Panc1 (cell line): ENCODE measurements at regions of chr1 and their contacts with region 1.

Region 1: GRCh38 chr1:40373338-40374283 is at the start of gene SMAP2:
- DNase-seq: peak; percentile 64
- ATAC-seq: peak; percentile 97
- H3K4me3 ChIP-seq: peak within 1 kb of the TSS; percentile 69 to 91
- H3K27ac ChIP-seq: peak within 1 kb of the TSS; percentile 67
- H3K4me1 ChIP-seq: peaks cover 6% of the 10 kb centered on the region; the same call in 1 of the 2 replicates
- H3K27me3 ChIP-seq: no peaks in the 10 kb centered on the region
- CTCF ChIP-seq: no peak
- total RNA-seq, gene SMAP2: 21.5 TPM

Region 2: DNA sequence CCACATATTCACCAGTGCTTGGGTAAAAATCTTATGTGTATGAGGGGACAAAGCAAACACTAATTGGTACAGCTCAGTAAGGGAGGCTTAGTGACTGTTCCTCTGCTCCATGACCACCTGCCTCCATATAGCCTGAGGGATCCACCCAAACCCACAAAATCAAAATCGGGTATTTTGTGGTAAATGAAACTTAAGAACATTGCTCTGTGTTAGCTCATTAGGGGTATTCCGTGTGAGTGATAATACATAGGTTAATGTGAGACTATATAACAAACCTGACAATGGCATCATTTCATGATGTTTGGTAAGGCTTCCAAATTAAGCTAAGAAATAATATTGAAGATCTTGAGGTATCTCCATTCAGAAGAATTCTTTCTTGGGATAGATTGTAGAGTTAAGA is 82.3 kb before region 1 on chr1:
- CTCF ChIA-PET with region 1: no interaction called
- POLR2A ChIA-PET with region 1: no interaction called
- in situ Hi-C with region 1: no loop called
- intact Hi-C with region 1: no loop called
- DNase-seq: no peak
- ATAC-seq: no peak
- H3K4me3 ChIP-seq: no peak overlapping the region
- H3K27ac ChIP-seq: no peak overlapping the region
- H3K4me1 ChIP-seq: no peaks in the 10 kb centered on the region
- H3K27me3 ChIP-seq: no peaks in the 10 kb centered on the region
- CTCF ChIP-seq: no peak

Region 3: DNA sequence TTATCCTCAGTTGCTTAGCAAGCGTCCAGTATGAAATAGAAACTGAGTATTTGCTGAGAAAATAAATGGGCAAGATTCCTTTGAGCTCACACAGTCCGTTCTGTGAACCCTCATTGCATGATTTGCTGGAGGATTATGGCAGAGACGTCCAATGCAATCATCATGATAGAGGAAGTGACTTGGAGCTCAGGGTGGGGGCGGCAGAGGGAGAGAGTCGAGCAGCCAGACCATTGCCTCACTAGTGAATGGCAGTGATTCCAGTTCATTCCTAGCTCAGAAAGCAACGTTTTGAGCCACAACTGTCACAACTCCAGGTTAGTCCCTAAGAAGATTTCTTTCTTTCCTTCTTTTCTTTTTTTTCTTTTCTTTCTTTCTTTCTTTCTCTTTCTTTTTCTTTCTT is 29.0 kb before region 1 on chr1:
- CTCF ChIA-PET with region 1: no interaction called
- POLR2A ChIA-PET with region 1: interaction called, 12 read pairs
- in situ Hi-C with region 1: no loop called
- intact Hi-C with region 1: no loop called
- DNase-seq: no peak
- ATAC-seq: peak; percentile 83
- H3K4me3 ChIP-seq: no peak overlapping the region
- H3K27ac ChIP-seq: no peak overlapping the region
- H3K4me1 ChIP-seq: no peaks in the 10 kb centered on the region
- H3K27me3 ChIP-seq: no peaks in the 10 kb centered on the region
- CTCF ChIP-seq: no peak